CD4-positive, alpha-beta memory T cell (primary cell): ENCODE measurements at regions of chr9 and their contacts with region 1.

Region 1: DNA sequence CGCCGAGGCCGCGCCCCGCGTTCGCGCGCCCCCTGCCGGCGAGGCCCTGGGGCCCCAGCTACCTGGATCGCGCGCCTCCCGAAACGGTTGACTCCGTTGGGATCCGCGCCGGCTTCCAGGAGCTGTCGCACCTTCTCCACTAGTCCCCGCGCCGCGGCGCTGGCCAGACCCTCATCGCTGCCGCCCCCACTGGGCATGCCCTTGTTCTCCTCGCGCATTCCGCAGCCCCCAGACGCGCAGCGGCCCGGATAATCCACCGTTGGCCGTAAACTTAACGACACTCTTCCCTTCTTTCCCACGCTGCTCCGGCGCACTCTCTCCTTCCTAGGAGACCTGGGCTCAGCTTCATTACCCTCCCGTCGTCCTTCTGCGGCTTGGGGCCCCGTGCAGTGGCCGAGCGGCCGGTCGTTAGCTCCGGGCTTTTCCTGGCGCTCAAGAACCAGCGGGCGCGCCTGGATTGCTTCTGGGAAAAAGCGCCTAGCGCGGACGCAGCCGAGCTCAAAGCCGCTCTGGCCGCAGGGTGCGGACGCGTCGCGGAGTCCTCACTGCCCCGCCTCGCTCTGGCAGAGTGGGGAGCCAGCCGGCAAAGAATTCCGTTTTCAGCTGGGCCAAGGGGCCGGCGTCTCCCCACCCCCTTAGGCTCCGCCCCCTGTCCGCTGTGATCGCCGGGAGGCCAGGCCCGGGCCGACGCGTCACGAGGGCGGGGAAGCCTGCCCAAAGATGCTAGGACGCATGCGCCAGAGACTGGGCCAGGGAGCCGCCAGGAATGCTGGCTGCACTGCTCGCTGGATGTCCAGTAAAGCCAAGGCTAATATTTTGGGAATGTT is at the start of gene CDKN2B:
- DNase-seq: peak; percentile 64 to 71 (median 65)
- H3K4me3 ChIP-seq: peak within 1 kb of the TSS; percentile 8 to 65
- H3K4me3 Mint-ChIP-seq: peak within 1 kb of the TSS; percentile 69 to 90 (median 84)
- H3K27ac ChIP-seq: peak within 1 kb of the TSS; percentile 5
- H3K27ac Mint-ChIP-seq: peak within 1 kb of the TSS in 6 of 7 donors; percentile 16 to 81 (median 56)
- H3K4me1 ChIP-seq: peaks cover 29% of the 10 kb centered on the region
- H3K4me1 Mint-ChIP-seq: peaks cover 15 to 27% (median 21%) of the 10 kb centered on the region in 4 donors
- H3K27me3 ChIP-seq: peaks cover 49% of the 10 kb centered on the region
- H3K27me3 Mint-ChIP-seq: peaks cover 26 to 30% of the 10 kb centered on the region in 2 donors
- total RNA-seq, gene CDKN2B: 0.64 TPM

Region 2: GRCh38 chr9:21802195-21803000 is 206.6 kb before region 1 on chr9 and contains the start of gene MTAP:
- CTCF ChIA-PET with region 1: interaction called, 355 read pairs
- POLR2A ChIA-PET with region 1: interaction called, 6 read pairs
- intact Hi-C with region 1: no loop called
- DNase-seq: peak in 4 of 5 donors; percentile 66 to 79 (median 76)
- H3K4me3 ChIP-seq: peak within 1 kb of the TSS; percentile 69 to 86
- H3K4me3 Mint-ChIP-seq: peak within 1 kb of the TSS; percentile 95 to 100 (median 99)
- H3K27ac ChIP-seq: peak within 1 kb of the TSS; percentile 50
- H3K27ac Mint-ChIP-seq: peak within 1 kb of the TSS; percentile 94 to 99 (median 98)
- H3K4me1 ChIP-seq: peaks cover 37% of the 10 kb centered on the region
- H3K4me1 Mint-ChIP-seq: peaks cover 28 to 52% (median 39%) of the 10 kb centered on the region in 4 donors
- H3K27me3 ChIP-seq: no peaks in the 10 kb centered on the region
- H3K27me3 Mint-ChIP-seq: peaks cover 4 to 5% of the 10 kb centered on the region in 2 donors
- total RNA-seq, gene MTAP: 45.5 to 47.9 TPM

Region 3: DNA sequence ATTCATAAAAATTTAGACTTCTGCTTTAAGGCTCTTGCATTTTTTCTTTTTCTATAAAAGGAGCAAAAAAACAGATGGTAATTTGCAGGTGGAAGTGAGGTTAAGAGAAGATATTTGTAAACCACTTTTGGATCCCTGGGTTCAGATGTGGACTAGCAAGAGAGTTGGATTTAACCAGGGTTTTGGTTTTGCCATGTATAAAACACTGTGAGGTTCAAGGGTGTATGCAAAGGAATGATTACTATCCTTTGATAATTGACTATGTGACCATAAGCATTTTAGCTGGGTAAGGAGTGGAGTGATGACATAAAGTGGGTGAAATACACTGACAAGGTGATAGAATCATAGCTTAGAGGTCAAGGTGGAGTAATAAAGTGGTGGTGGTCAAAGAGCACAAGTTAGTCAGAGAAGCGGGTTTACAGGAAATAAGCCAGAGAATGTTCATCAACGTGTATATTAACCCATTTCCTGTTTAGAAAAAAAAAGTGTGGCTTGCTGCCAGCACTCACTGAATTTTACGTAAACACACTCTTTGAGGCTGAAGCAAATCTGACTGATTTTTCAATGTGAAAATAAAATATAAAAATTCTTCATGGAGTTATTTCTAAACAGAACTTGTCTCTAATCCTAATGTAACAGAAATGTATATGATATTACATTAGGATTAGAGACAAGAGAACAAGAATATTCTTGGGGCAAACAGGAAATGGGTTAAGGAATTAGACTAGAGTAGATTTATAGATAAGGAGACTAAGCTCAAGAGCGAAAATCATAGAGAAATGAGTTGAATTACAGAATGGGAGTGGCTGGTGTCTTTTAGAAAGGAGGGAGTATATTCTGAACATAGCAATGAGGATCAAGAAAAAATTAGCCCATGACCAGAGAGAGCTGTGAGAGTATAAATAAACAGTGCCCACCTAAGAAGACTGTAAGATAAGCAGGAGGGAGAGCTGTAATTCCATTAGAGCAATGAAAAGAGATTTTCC is 89.3 kb before region 1 on chr9:
- CTCF ChIA-PET with region 1: interaction called, 13 read pairs
- POLR2A ChIA-PET with region 1: interaction called, 4 read pairs
- intact Hi-C with region 1: no loop called
- DNase-seq: peak; percentile 51 to 79 (median 75)
- H3K4me3 ChIP-seq: peak overlapping the region in 1 of 2 donors; percentile 22
- H3K4me3 Mint-ChIP-seq: peak overlapping the region; percentile 4 to 76 (median 63)
- H3K27ac ChIP-seq: no peak overlapping the region
- H3K27ac Mint-ChIP-seq: peak overlapping the region; percentile 58 to 96 (median 85)
- H3K4me1 ChIP-seq: peaks cover 31% of the 10 kb centered on the region
- H3K4me1 Mint-ChIP-seq: peaks cover 21 to 43% (median 35%) of the 10 kb centered on the region in 4 donors
- H3K27me3 ChIP-seq: no peaks in the 10 kb centered on the region
- H3K27me3 Mint-ChIP-seq: no peaks in the 10 kb centered on the region

Region 4: GRCh38 chr9:21985964-21986667 is 22.8 kb before region 1 on chr9:
- CTCF ChIA-PET with region 1: interaction called, 50 read pairs
- POLR2A ChIA-PET with region 1: no interaction called
- intact Hi-C with region 1: no loop called
- DNase-seq: no peak
- H3K4me3 ChIP-seq: no peak overlapping the region
- H3K4me3 Mint-ChIP-seq: no peak overlapping the region
- H3K27ac ChIP-seq: no peak overlapping the region
- H3K27ac Mint-ChIP-seq: no peak overlapping the region
- H3K4me1 ChIP-seq: no peaks in the 10 kb centered on the region
- H3K4me1 Mint-ChIP-seq: peaks cover 0 to 5% (median 4%) of the 10 kb centered on the region in 4 donors
- H3K27me3 ChIP-seq: peaks cover 4% of the 10 kb centered on the region
- H3K27me3 Mint-ChIP-seq: peaks cover 29 to 30% of the 10 kb centered on the region in 2 donors

Region 5: DNA sequence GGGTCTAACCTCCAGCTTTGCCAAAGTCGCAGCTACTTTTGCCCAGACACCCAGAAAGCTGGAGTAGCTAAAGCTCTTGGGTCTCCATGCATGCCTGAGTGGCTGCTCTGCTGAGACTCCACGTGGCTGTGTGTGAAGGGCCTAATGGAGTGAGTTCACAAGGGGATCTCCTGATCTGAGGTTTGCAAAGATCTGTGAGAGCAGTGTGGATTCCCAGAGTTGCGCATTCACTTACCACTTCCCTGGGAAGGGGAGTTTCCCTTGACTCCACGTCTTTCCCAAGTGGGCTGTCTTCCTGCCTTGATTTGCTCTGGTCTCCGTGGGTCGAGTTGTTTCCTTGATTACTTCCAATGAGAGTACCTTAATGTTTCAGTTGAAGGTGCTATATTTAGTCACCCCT is 17.7 kb after region 1 on chr9:
- CTCF ChIA-PET with region 1: interaction called, 13 read pairs
- POLR2A ChIA-PET with region 1: no interaction called
- intact Hi-C with region 1: no loop called
- DNase-seq: no peak
- H3K4me3 ChIP-seq: no peak overlapping the region
- H3K4me3 Mint-ChIP-seq: no peak overlapping the region
- H3K27ac ChIP-seq: no peak overlapping the region
- H3K27ac Mint-ChIP-seq: no peak overlapping the region
- H3K4me1 ChIP-seq: no peaks in the 10 kb centered on the region
- H3K4me1 Mint-ChIP-seq: peaks cover 0 to under 1% (median 0%) of the 10 kb centered on the region in 4 donors
- H3K27me3 ChIP-seq: no peaks in the 10 kb centered on the region
- H3K27me3 Mint-ChIP-seq: peaks cover 3 to 6% of the 10 kb centered on the region in 2 donors

Region 6: DNA sequence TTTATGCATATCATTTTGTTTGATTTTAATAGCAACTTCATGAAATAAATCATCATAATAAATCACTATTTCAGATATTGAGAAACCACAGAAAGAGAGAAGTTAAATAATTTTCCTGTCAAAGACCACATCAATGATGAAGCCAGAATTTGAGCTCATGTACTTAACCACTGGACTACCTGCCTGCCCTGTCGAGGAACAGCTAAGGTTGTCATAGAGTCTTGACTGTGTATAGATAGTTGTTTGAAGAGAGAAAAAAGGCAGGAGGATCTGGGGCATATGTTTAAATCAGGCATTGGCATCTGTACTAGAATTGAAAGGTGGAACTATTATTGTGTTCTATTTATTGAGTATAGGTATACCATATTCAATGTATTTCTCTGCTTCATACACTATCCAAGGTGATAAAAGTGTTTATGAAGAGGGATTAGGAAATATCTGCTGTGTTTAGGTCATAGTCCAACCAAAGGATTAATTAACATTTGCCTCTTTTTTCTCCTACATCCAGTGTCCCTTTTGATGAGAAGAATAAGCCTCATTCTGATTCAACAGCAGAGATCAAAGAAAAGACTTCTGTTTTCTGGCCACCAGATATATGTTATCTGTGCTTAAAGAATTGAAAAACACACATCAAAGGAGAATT is 37.4 kb after region 1 on chr9:
- CTCF ChIA-PET with region 1: interaction called, 13 read pairs
- POLR2A ChIA-PET with region 1: interaction called, 3 read pairs
- intact Hi-C with region 1: no loop called
- DNase-seq: peak in 1 of 5 donors; percentile 1
- H3K4me3 ChIP-seq: no peak overlapping the region
- H3K4me3 Mint-ChIP-seq: peak overlapping the region in 1 of 8 donors; percentile 24
- H3K27ac ChIP-seq: no peak overlapping the region
- H3K27ac Mint-ChIP-seq: no peak overlapping the region
- H3K4me1 ChIP-seq: peaks cover 28% of the 10 kb centered on the region
- H3K4me1 Mint-ChIP-seq: peaks cover 12 to 24% (median 18%) of the 10 kb centered on the region in 4 donors
- H3K27me3 ChIP-seq: no peaks in the 10 kb centered on the region
- H3K27me3 Mint-ChIP-seq: no peaks in the 10 kb centered on the region

Region 7: DNA sequence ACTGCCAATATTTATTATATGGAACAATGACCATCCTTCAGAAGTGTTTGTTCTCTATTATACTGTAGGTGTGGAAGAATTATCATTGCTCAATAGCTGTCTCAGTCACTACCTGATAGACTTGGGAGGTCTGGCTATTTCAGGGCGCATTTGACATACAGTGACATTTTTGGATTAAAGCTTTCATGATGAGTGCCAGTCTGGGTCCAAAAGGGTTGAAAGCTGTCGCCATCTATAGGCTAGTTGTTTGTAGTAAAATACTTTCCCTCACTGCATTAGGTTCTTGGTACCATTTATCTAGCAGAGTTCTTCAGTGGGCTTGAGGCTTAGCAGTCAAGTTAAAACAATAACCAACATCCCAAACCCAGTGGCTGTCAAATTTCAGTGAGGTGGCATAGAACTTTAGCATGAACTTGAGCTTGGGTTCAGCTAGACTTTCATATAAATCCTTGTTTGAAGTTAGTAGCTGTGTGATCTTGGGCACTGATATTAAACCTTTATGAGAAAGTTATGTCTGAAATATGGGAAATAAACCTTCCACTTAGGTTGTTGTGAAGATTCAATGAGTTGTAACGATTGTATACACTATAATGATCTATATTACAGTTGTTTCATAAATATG is 110.7 kb after region 1 on chr9:
- CTCF ChIA-PET with region 1: interaction called, 29 read pairs
- POLR2A ChIA-PET with region 1: no interaction called
- intact Hi-C with region 1: no loop called
- DNase-seq: peak; percentile 8 to 36 (median 26)
- H3K4me3 ChIP-seq: no peak overlapping the region
- H3K4me3 Mint-ChIP-seq: no peak overlapping the region
- H3K27ac ChIP-seq: no peak overlapping the region
- H3K27ac Mint-ChIP-seq: no peak overlapping the region
- H3K4me1 ChIP-seq: peaks cover 6% of the 10 kb centered on the region
- H3K4me1 Mint-ChIP-seq: peaks cover 0 to 4% (median under 1%) of the 10 kb centered on the region in 4 donors
- H3K27me3 ChIP-seq: no peaks in the 10 kb centered on the region
- H3K27me3 Mint-ChIP-seq: peaks cover 0 to 4% of the 10 kb centered on the region in 2 donors